ENCODE measurements at regions of chr10 and their contacts with region 1.

Region 1: DNA sequence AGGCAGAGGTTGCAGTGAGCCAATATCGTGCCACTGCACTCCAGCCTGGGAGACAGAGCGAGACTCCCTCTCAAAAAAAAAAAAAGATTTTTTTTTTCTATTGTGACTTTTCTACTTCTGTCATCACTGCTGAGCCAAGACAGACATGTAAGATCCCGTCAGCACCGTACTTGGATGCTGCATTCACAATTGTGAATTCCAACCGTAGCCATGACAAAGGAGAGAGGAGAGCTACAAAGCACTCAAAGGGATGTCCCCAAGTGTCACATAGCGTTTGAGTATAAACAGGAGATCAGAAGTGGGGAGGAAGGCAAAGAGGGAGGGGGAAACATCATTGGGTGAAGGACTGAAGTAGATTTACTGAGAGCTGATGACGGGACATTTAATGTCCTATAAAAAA is 144.2 kb downstream of the PRPF18 start:
- DNase-seq: no peak
- H3K4me3 ChIP-seq: no peak overlapping the region
- H3K27ac ChIP-seq: no peak overlapping the region
- H3K4me1 ChIP-seq: peaks cover 16% of the 10 kb centered on the region
- H3K27me3 ChIP-seq: no peaks in the 10 kb centered on the region
- CTCF ChIP-seq: no peak

Region 2: GRCh38 chr10:13247246-13247645 is 483.7 kb before region 1 on chr10:
- CTCF ChIA-PET with region 1: interaction called, 11 read pairs
- POLR2A ChIA-PET with region 1: no interaction called
- intact Hi-C with region 1: no loop called
- DNase-seq: no peak
- H3K4me3 ChIP-seq: no peak overlapping the region
- H3K27ac ChIP-seq: no peak overlapping the region
- H3K4me1 ChIP-seq: no peaks in the 10 kb centered on the region
- H3K27me3 ChIP-seq: no peaks in the 10 kb centered on the region
- CTCF ChIP-seq: no peak